ENCODE measurements at regions of chr6 and their contacts with region 1.

Region 1: GRCh38 chr6:158207422-158207788 is 39.3 kb downstream of the GTF2H5 start:
- DNase-seq: peak; percentile 54
- H3K4me3 Mint-ChIP-seq: peak overlapping the region; percentile 61
- H3K27ac Mint-ChIP-seq: peak overlapping the region; percentile 95
- H3K4me1 Mint-ChIP-seq: peaks cover 35% of the 10 kb centered on the region
- H3K27me3 Mint-ChIP-seq: no peaks in the 10 kb centered on the region

Region 2: DNA sequence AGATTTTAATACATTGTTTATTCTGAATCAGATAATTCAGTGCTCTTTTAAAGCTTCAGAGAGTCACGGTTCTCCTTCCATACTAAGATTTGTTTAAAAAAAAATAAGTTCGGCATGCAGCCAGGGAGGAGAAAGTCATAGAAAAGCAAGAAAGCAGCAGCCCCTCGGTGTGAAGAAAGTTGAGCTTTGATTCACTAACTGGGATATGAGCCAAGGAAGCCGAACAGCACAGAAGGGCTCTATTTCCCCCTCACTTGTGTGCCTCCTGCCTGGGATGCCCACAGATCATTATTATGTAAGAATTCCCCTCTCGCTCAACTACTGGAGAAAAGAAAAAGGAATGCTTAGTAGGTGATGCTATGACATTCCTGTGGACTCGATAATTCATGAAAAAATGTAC is 295.1 kb before region 1 on chr6:
- intact Hi-C with region 1: no loop called
- DNase-seq: no peak
- H3K4me3 Mint-ChIP-seq: no peak overlapping the region
- H3K27ac Mint-ChIP-seq: no peak overlapping the region
- H3K4me1 Mint-ChIP-seq: peaks cover 14% of the 10 kb centered on the region
- H3K27me3 Mint-ChIP-seq: no peaks in the 10 kb centered on the region

Region 3: GRCh38 chr6:158168040-158168289 is 39.4 kb before region 1 on chr6 and contains the start of gene SERAC1:
- intact Hi-C with region 1: loop called (anchors 2 kb)
- DNase-seq: no peak
- H3K4me3 Mint-ChIP-seq: peak within 1 kb of the TSS; percentile 90
- H3K27ac Mint-ChIP-seq: peak within 1 kb of the TSS; percentile 91
- H3K4me1 Mint-ChIP-seq: peaks cover 25% of the 10 kb centered on the region
- H3K27me3 Mint-ChIP-seq: no peaks in the 10 kb centered on the region
- total RNA-seq, gene SERAC1: 5.4 and 6.6 TPM in 2 replicates

Region 4: DNA sequence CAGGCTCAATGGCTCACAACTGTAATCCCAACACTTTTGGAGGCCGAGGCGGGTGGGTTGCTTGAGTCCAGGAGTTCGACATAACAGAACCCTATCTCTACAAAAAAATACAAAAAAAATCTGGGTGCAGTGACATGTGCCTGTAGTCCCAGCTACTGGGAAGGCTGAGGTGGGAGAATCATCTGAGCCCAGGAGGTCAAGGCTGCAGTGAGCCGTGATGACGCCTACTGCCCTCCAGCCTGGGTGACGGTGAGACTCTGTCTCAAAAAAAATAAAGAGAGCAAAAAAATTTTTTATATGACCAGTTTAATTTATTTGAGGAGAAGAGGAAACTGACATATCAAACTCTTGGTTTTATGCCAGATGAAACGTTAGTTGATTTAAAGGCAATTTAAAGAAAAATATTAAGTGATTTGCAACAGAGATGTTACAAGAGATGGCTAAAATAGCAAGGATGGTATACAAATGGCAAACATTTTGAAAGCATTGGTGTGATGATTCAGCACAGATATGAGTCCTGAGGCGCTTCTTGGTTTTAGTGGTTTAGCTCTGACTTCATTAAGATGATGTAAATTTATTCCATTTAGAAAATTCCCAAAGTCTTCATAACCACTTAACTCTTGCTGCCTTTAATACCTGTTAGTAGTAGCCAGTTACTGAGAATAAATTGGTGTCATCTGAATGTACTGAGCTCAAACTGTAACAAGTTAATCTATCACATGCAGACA is 21.5 kb before region 1 on chr6:
- intact Hi-C with region 1: loop called (anchors 2 kb)
- DNase-seq: no peak
- H3K4me3 Mint-ChIP-seq: no peak overlapping the region
- H3K27ac Mint-ChIP-seq: peak overlapping the region; percentile 50
- H3K4me1 Mint-ChIP-seq: peaks cover 32% of the 10 kb centered on the region
- H3K27me3 Mint-ChIP-seq: no peaks in the 10 kb centered on the region

Region 5: GRCh38 chr6:158231551-158232315 is 24.3 kb after region 1 on chr6:
- intact Hi-C with region 1: no loop called
- DNase-seq: peak; percentile 68
- H3K4me3 Mint-ChIP-seq: peak overlapping the region; percentile 89
- H3K27ac Mint-ChIP-seq: peak overlapping the region; percentile 85
- H3K4me1 Mint-ChIP-seq: peaks cover 20% of the 10 kb centered on the region
- H3K27me3 Mint-ChIP-seq: peaks cover 11% of the 10 kb centered on the region

Region 6: GRCh38 chr6:158290659-158291058 is 83.3 kb after region 1 on chr6:
- intact Hi-C with region 1: no loop called
- DNase-seq: peak; percentile 48
- H3K4me3 Mint-ChIP-seq: peak overlapping the region; percentile 54
- H3K27ac Mint-ChIP-seq: peak overlapping the region; percentile 83
- H3K4me1 Mint-ChIP-seq: peaks cover 46% of the 10 kb centered on the region
- H3K27me3 Mint-ChIP-seq: no peaks in the 10 kb centered on the region

Region 7: GRCh38 chr6:158718461-158719046 is 511.1 kb after region 1 on chr6:
- intact Hi-C with region 1: no loop called
- DNase-seq: no peak
- H3K4me3 Mint-ChIP-seq: no peak overlapping the region
- H3K27ac Mint-ChIP-seq: no peak overlapping the region
- H3K4me1 Mint-ChIP-seq: peaks cover 56% of the 10 kb centered on the region
- H3K27me3 Mint-ChIP-seq: no peaks in the 10 kb centered on the region

Measured in activated T-helper 2 cell treated with anti-CD3 and anti-CD28 coated beads, Interferon-gamma antibody, Interleukin-2, Interleukin-4, amounts not matched to agents 10 μg/mL and 5 μg/mL and 100 μg/mL, durations not matched to agents 14 hours and 24 hours and 36 hours (primary cell).